ENCODE measurements at regions of chr10 and their contacts with region 1.

Region 1: DNA sequence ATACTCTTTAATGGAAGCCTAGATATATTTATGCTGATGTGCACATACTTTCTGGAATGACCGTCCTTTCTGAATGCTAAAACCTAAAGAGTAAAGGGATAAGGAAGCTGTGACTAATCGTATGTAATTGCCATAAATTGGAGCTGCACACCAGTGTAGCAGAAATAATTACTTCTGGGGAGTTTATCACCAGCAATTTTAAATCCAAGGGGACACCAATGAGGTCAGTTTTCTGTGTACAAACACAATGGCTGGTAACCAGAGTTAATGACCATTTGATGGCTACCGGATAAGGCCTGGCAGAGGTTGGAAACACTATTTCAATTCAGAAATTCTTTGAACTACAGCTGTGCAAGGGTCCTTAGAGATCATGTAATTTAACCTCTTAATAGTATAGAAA is 670.1 kb downstream of the REEP3 start:
- DNase-seq: no peak
- H3K4me3 ChIP-seq: no peak overlapping the region
- CTCF ChIP-seq: no peak
- POLR2A ChIP-seq: no peak

Region 2: GRCh38 chr10:64148607-64149006 is 42.7 kb before region 1 on chr10:
- intact Hi-C with region 1: loop called (anchors 2 kb)
- DNase-seq: no peak
- H3K4me3 ChIP-seq: no peak overlapping the region
- CTCF ChIP-seq: no peak
- POLR2A ChIP-seq: no peak